PC-9 (cell line): ENCODE measurements at regions of chr7 and their contacts with region 1.

Region 1: GRCh38 chr7:48360574-48360973 is 189.3 kb downstream of the ABCA13 start:
- DNase-seq: no peak
- H3K4me3 ChIP-seq: no peak overlapping the region
- H3K27ac ChIP-seq: no peak overlapping the region
- H3K4me1 ChIP-seq: no peaks in the 10 kb centered on the region
- H3K27me3 ChIP-seq: peaks cover 21% of the 10 kb centered on the region
- CTCF ChIP-seq: no peak

Region 2: GRCh38 chr7:48390388-48391327 is 30.1 kb after region 1 on chr7:
- CTCF ChIA-PET with region 1: no interaction called
- POLR2A ChIA-PET with region 1: interaction called, 19 read pairs
- intact Hi-C with region 1: no loop called
- DNase-seq: no peak
- H3K4me3 ChIP-seq: no peak overlapping the region
- H3K27ac ChIP-seq: no peak overlapping the region
- H3K4me1 ChIP-seq: peaks cover 6% of the 10 kb centered on the region; the same call in 1 of the 2 replicates
- H3K27me3 ChIP-seq: 0 out of 2 replicates have a peak, but pooled peaks cover 2% of the 10 kb centered on the region
- CTCF ChIP-seq: no peak